ENCODE measurements at regions of chr12 and their contacts with region 1.

Region 1: GRCh38 chr12:8544295-8544694 is 3.6 kb upstream of the CLEC4E start:
- DNase-seq: peak; percentile 27
- ATAC-seq: peak; percentile 72
- H3K4me3 ChIP-seq: no peak overlapping the region
- H3K27ac ChIP-seq: no peak overlapping the region
- H3K4me1 ChIP-seq: no peaks in the 10 kb centered on the region
- H3K27me3 ChIP-seq: no peaks in the 10 kb centered on the region
- CTCF ChIP-seq: peak; percentile 74
- EP300 ChIP-seq: no peak
- POLR2A ChIP-seq: no peak
- RAD21 ChIP-seq: no peak

Region 2: DNA sequence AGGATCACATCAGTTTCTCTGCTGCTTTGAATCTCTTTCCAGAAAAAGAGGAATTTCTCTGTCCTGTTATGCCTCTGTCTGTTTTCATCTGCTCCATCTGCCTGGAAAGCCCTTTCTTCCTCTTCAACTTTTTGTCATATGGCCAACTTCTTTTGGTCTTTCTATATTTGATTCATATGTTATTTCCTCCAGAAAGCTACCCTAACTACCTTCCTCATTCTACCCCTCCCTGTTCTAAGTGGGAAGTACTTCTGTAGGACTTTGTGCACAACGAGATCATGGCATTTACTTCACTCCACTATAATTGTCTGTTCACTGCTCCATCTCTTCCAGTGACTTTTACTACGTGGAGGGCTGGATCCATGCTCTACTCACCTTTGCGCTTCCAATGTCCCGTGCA is 25.1 kb before region 1 on chr12:
- CTCF ChIA-PET with region 1: no interaction called
- POLR2A ChIA-PET with region 1: no interaction called
- in situ Hi-C with region 1: no loop called
- intact Hi-C with region 1: no loop called
- DNase-seq: no peak
- ATAC-seq: no peak
- H3K4me3 ChIP-seq: no peak overlapping the region
- H3K27ac ChIP-seq: no peak overlapping the region
- H3K4me1 ChIP-seq: no peaks in the 10 kb centered on the region
- H3K27me3 ChIP-seq: no peaks in the 10 kb centered on the region; a peak in 1 of 5 replicates
- CTCF ChIP-seq: no peak
- EP300 ChIP-seq: no peak
- POLR2A ChIP-seq: no peak
- RAD21 ChIP-seq: no peak

Region 3: DNA sequence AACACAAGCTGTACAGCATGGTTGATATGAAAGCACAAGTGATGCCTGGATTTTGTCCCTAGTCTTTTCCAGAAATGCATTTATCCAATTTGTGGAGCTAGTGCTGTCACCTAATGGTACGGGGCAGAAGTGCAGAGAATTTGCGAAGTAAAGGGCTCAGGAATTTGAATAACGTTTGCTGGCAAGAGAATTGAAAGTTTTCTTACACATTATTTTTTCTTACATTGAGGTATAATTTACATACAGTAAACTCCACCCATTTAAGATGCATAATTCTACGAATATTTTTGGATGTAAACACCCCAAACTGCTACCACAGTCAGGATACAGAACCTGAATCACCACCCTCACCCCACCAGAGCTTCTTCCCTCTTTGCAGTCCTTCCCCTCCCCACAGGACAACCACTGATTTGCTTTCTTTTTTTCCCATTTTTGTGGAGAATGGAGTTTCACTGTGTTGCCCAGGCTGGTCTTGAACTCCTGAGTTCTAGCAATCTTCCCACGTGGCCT is 64.8 kb after region 1 on chr12:
- CTCF ChIA-PET with region 1: interaction called, 11 read pairs
- POLR2A ChIA-PET with region 1: no interaction called
- in situ Hi-C with region 1: loop called (anchors 10 kb)
- intact Hi-C with region 1: loop called (anchors 1 kb)
- DNase-seq: peak; percentile 28
- ATAC-seq: peak; percentile 66
- H3K4me3 ChIP-seq: no peak overlapping the region
- H3K27ac ChIP-seq: no peak overlapping the region
- H3K4me1 ChIP-seq: no peaks in the 10 kb centered on the region
- H3K27me3 ChIP-seq: peaks cover 0 to 20% of the 10 kb centered on the region in 2 experiments; a peak in 3 of 5 replicates
- CTCF ChIP-seq: peak; percentile 71
- EP300 ChIP-seq: no peak
- POLR2A ChIP-seq: no peak
- RAD21 ChIP-seq: peak; percentile 33; the same call in 1 of the 2 replicates